Gastrocnemius medialis (tissue), 4 donors: ENCODE measurements at regions of chr3 and their contacts with region 1.

Region 1: DNA sequence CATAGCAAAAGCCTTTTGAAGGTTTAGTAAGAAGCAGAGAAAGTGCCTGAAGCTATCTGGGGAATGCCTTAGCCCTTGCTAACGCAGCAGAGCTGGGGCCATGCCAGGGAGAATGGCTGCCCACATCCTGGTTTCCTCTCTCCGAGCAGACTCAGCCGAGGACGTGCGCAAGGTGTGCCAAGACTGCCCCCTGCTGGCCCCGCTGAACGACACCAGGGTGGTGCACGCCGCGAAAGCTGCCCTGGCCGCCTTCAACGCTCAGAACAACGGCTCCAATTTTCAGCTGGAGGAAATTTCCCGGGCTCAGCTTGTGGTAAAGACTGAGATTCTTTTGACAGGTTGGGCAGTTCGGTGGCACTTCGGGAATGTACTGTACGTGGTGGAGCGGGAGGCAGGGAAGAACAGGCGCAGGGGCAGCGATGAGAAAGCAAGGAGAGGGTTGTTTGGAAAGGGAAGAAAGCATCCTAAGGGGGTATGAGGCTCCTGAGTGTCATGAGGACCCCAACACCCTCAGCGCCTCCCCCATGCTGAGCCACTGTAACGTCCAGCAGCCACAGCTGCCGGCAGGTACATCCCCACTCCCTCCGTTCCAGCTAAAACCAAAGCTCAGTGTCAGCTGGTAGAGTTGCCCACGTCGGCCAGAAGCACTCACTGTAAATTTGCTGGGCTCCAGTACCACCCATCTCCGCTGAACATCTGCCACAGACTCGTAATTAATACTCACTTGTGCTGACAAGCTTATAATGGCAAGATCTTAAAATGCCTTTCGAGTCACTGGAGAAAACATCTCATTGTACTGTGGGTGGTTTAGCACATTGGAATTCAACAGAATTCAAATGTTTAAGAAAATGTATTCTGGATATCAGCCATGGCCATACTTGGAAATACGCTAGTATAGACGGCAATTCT is 4.4 kb downstream of the AHSG start:
- DNase-seq: peak; percentile 31 to 47
- ATAC-seq: peak; percentile 68 to 81
- H3K4me3 ChIP-seq: peak overlapping the region in 1 of 4 donors; percentile 27
- H3K27ac ChIP-seq: no peak overlapping the region
- H3K4me1 ChIP-seq: peaks cover 0 to 6% of the 10 kb centered on the region in 2 donors
- H3K27me3 ChIP-seq: peaks cover 10 to 15% (median 14%) of the 10 kb centered on the region in 3 donors
- CTCF ChIP-seq: peak; percentile 39 to 86 (median 65)
- POLR2A ChIP-seq: no peak

Region 2: GRCh38 chr3:186464424-186465093 is 152.7 kb before region 1 on chr3:
- in situ Hi-C with region 1: no loop called
- intact Hi-C with region 1: no loop called
- DNase-seq: no peak
- ATAC-seq: no peak
- H3K4me3 ChIP-seq: no peak overlapping the region
- H3K27ac ChIP-seq: no peak overlapping the region
- H3K4me1 ChIP-seq: no peaks in the 10 kb centered on the region
- H3K27me3 ChIP-seq: no peaks in the 10 kb centered on the region
- CTCF ChIP-seq: no peak
- POLR2A ChIP-seq: no peak

Region 3: DNA sequence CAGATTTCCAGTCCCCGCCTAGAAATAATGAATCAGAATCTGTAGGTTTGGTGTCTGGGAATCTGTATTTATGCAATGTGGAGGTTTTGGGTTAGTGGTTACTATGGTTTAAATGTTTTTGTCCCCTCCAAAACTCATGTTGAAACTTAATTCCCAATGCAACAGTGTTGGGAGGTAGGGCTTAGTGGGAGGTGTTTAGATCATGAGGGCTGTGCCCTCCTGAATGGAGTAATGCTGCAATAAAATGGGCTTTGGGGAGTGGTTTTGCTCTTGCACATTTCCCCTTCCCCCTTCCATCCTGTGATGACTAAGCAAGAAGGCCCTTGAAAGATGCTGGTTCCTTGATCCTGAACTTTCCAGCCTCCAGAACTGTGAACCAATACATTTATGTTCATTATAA is 198.1 kb after region 1 on chr3:
- in situ Hi-C with region 1: loop called (anchors 5 to 10 kb)
- intact Hi-C with region 1: loop called (anchors 2 kb)
- DNase-seq: no peak
- ATAC-seq: no peak
- H3K4me3 ChIP-seq: no peak overlapping the region
- H3K27ac ChIP-seq: no peak overlapping the region
- H3K4me1 ChIP-seq: no peaks in the 10 kb centered on the region
- H3K27me3 ChIP-seq: peaks cover 0 to 8% (median 5%) of the 10 kb centered on the region in 3 donors
- CTCF ChIP-seq: no peak
- POLR2A ChIP-seq: no peak

Region 4: DNA sequence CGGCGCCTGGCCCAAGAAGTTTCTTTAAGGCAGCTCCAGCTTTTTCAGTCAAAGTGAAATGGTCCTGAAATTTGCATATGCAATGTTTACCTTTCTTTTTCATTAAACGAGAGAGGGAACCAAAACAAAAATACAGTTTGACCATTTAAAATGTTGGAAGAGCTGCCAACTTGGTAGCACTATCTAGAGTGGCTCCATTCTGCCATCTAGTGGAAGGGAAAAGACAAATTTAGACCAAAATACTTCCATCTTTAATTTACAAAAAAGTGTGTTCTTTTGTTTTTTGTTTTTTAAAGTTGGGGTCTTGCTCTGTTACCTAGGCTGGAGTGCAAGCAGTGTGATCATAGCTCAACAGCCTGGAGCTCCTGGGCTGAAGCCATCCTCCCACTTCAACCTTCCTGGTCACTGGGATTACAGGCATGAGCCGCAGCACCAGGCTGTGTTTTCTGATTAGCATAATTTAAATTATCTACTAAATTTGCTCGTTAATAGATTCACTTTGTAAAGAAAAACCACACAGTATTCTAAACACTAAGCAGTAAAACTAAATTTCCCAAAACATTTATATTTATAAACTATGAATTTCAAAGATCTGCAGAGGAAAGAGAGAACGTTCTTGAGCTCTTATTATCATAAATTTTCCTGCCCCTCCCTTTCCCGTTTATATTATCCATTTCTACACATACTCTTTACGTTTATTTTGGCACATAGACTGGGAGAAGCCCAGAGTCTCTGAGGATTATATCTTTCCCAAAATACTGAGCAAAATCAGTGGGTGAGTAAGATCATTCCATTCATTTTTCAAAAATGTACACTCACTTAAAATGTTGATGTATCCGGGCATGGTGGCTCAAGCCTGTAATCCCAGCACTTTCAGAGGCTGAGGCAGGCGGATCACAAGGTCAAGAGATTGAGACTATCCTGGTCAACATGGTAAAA is 204.4 kb after region 1 on chr3:
- in situ Hi-C with region 1: loop called (anchors 5 to 10 kb)
- intact Hi-C with region 1: loop called (anchors 2 kb)
- DNase-seq: no peak
- ATAC-seq: peak; percentile 43 to 44
- H3K4me3 ChIP-seq: no peak overlapping the region
- H3K27ac ChIP-seq: no peak overlapping the region
- H3K4me1 ChIP-seq: peaks cover 0 to 5% of the 10 kb centered on the region in 2 donors
- H3K27me3 ChIP-seq: peaks cover 20 to 26% (median 24%) of the 10 kb centered on the region in 3 donors
- CTCF ChIP-seq: peak; percentile 36 to 75 (median 49)
- POLR2A ChIP-seq: no peak

Region 5: GRCh38 chr3:187164885-187165543 is 547.7 kb after region 1 on chr3:
- in situ Hi-C with region 1: loop called (anchors 25 kb)
- intact Hi-C with region 1: loop called (anchors 10 kb)
- DNase-seq: peak in 1 of 2 donors; percentile 15
- ATAC-seq: peak; percentile 68 to 90
- H3K4me3 ChIP-seq: no peak overlapping the region
- H3K27ac ChIP-seq: no peak overlapping the region
- H3K4me1 ChIP-seq: peaks cover 11 to 24% of the 10 kb centered on the region in 2 donors
- H3K27me3 ChIP-seq: no peaks in the 10 kb centered on the region
- CTCF ChIP-seq: peak; percentile 55 to 83 (median 69)
- POLR2A ChIP-seq: no peak